ENCODE measurements at regions of chr4 and their contacts with region 1.

Region 1: DNA sequence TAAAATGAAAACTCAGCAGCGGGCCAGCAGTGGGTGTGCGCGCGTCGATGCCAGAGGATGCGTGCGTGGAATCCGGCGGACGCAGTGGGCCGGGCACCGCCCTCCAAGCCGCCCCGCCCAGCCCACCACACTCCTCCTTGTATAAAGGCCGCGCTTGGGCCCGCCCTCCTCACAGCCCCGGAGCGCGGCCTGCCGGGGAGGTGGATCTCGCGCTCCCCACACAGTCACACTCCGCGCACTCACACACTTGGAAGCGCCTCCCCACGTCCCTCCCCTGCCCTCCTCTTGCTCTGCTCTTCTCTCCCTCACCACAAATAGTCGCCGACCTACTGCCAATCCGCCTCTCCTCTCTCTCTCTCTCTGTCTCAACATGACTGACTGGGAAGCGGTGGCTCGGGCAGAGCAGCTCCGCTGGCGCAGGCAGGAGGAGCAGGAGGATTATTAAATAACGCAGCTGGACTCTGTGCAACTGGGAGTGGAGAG is at the start of gene CCSER1:
- DNase-seq: peak; percentile 71
- H3K4me3 ChIP-seq: peak within 1 kb of the TSS; percentile 54 to 74 (median 63)
- H3K27ac ChIP-seq: no peak within 1 kb of the TSS
- H3K4me1 ChIP-seq: peaks cover 8% of the 10 kb centered on the region
- H3K27me3 ChIP-seq: peaks cover 1% of the 10 kb centered on the region
- CTCF ChIP-seq: no peak
- total RNA-seq, gene CCSER1: 0.26 to 12.0 TPM

Region 2: DNA sequence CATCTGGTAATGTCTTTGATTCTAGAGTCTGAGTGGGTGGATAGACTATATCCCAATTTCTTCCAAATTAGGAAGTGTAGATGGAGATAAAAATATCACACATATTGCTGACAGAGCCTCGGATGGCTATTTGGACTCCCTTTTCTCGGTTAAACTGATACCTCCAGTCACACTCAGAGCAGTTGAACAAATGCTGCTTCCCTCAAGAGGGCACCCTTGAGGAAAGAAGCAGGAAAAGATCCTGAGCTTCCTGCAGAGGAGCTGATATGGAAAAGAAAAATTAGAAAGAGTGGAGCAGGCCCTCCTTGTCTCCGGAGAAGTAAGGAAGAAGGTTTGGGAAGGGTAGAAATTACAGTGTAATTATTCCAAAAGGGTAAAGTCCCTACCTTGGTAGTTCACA is 96.3 kb before region 1 on chr4:
- CTCF ChIA-PET with region 1: no interaction called
- dilution Hi-C with region 1: no loop called
- in situ Hi-C with region 1: no loop called
- intact Hi-C with region 1: loop called (anchors 5 kb)
- DNase-seq: peak; percentile 16
- H3K4me3 ChIP-seq: no peak overlapping the region
- H3K27ac ChIP-seq: no peak overlapping the region
- H3K4me1 ChIP-seq: no peaks in the 10 kb centered on the region
- H3K27me3 ChIP-seq: no peaks in the 10 kb centered on the region
- CTCF ChIP-seq: peak; percentile 34 to 57

Region 3: GRCh38 chr4:90281541-90282355 is 154.5 kb after region 1 on chr4:
- CTCF ChIA-PET with region 1: no interaction called
- dilution Hi-C with region 1: no loop called
- in situ Hi-C with region 1: no loop called
- intact Hi-C with region 1: loop called (anchors 10 kb)
- DNase-seq: no peak
- H3K4me3 ChIP-seq: no peak overlapping the region
- H3K27ac ChIP-seq: no peak overlapping the region
- H3K4me1 ChIP-seq: no peaks in the 10 kb centered on the region
- H3K27me3 ChIP-seq: no peaks in the 10 kb centered on the region
- CTCF ChIP-seq: no peak

Measured in mammary epithelial cell (primary cell).